Panc1 (cell line): ENCODE measurements at regions of chr6 and their contacts with region 1.

Region 1: GRCh38 chr6:165850434-165851019 is 187.5 kb upstream of the PDE10A start:
- DNase-seq: peak; percentile 46
- ATAC-seq: peak; percentile 76
- H3K4me3 ChIP-seq: peak overlapping the region in 1 of 2 experiments; percentile 23; a peak in 2 of 4 replicates
- H3K27ac ChIP-seq: no peak overlapping the region
- H3K4me1 ChIP-seq: peaks cover 21% of the 10 kb centered on the region
- H3K27me3 ChIP-seq: no peaks in the 10 kb centered on the region
- CTCF ChIP-seq: peak; percentile 98

Region 2: DNA sequence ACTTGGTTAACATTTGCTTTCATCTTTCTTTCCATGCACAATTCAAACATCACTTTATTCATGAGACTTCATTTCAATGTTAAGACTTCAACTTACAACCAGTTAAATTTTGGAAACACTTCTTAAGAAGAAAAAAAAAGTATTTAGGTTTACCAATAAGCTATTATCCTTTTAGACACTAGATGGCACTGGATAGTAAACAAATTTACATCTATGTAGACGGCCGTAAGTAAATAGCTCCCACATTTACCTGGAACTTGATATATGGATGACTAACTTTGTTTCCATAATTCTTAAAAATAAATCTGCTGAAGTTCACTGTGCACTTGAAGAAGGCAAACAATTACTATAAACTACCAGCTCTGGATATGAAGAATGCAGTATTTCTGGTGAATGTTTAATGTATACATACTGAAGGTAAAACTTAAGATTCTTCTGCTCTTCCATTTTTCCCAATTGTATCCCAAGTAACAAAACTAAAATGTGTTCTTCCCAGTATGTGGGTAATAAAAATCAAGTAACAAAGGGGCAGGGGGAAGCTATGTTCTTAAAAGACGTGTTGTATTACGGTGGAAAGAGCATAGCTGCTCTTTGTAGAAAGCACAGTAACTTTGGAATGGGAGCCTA is 410.5 kb before region 1 on chr6:
- CTCF ChIA-PET with region 1: interaction called, 16 read pairs
- POLR2A ChIA-PET with region 1: no interaction called
- in situ Hi-C with region 1: no loop called
- intact Hi-C with region 1: loop called (anchors 2 kb)
- DNase-seq: peak; percentile 52
- ATAC-seq: peak; percentile 83
- H3K4me3 ChIP-seq: no peak overlapping the region
- H3K27ac ChIP-seq: no peak overlapping the region
- H3K4me1 ChIP-seq: peaks cover 4% of the 10 kb centered on the region
- H3K27me3 ChIP-seq: no peaks in the 10 kb centered on the region
- CTCF ChIP-seq: peak; percentile 65; the same call in 1 of the 2 replicates

Region 3: GRCh38 chr6:165662749-165663282 is 187.7 kb before region 1 on chr6 and contains the start of gene PDE10A:
- CTCF ChIA-PET with region 1: no interaction called
- POLR2A ChIA-PET with region 1: no interaction called
- in situ Hi-C with region 1: no loop called
- intact Hi-C with region 1: loop called (anchors 2 kb)
- DNase-seq: no peak
- ATAC-seq: peak; percentile 77
- H3K4me3 ChIP-seq: peak within 1 kb of the TSS; percentile 75 to 91
- H3K27ac ChIP-seq: peak within 1 kb of the TSS; percentile 90
- H3K4me1 ChIP-seq: peaks cover 31% of the 10 kb centered on the region
- H3K27me3 ChIP-seq: no peaks in the 10 kb centered on the region
- CTCF ChIP-seq: no peak; the same call in 1 of the 2 replicates
- total RNA-seq, gene PDE10A: 27.8 TPM

Region 4: DNA sequence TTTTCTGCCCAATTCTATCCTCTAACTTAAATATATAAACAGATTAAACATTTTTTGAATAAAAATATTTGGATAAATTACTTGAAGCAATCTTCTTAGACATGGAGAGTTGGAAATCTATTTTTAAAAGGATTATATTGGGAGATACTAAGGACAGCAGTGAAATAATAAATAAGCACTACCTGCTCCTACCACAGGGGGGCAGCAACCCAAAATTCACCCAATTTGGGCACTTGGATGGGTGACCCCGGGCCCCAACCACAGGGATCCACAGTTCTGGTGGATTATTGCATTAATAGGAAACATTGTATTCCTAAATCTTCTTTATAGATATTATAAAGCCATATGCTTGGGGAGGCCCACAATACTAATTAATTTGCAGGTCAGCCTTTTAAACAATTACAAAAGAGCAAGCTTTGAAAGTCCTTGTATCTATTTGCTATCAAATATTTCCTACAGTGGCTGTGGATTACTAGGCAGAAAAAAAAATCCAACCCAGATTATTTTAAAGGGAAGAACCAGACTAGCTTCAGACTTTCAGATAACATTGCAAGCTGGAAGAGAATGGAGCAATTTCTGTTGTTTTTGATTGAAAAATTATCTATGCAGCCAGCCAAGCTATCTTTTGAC is 121.1 kb before region 1 on chr6:
- CTCF ChIA-PET with region 1: interaction called, 5 read pairs
- POLR2A ChIA-PET with region 1: no interaction called
- in situ Hi-C with region 1: no loop called
- intact Hi-C with region 1: loop called (anchors 1 kb)
- DNase-seq: peak; percentile 7
- ATAC-seq: peak; percentile 71; the same call in 1 of the 2 replicates
- H3K4me3 ChIP-seq: no peak overlapping the region
- H3K27ac ChIP-seq: no peak overlapping the region
- H3K4me1 ChIP-seq: no peaks in the 10 kb centered on the region
- H3K27me3 ChIP-seq: no peaks in the 10 kb centered on the region
- CTCF ChIP-seq: peak; percentile 94

Region 5: GRCh38 chr6:166192136-166192535 is 341.6 kb after region 1 on chr6:
- CTCF ChIA-PET with region 1: no interaction called
- POLR2A ChIA-PET with region 1: no interaction called
- in situ Hi-C with region 1: no loop called
- intact Hi-C with region 1: no loop called
- DNase-seq: no peak
- ATAC-seq: no peak
- H3K4me3 ChIP-seq: no peak overlapping the region
- H3K27ac ChIP-seq: no peak overlapping the region
- H3K4me1 ChIP-seq: no peaks in the 10 kb centered on the region
- H3K27me3 ChIP-seq: no peaks in the 10 kb centered on the region
- CTCF ChIP-seq: no peak